Motor neuron (in vitro differentiated cells): ENCODE measurements at regions of chr1 and their contacts with region 1.

Region 1: GRCh38 chr1:78132174-78132947 is 86.6 kb downstream of the GIPC2 start:
- ATAC-seq: peak in 2 of 8 experiments; percentile 27 to 35
- H3K4me3 ChIP-seq: no peak overlapping the region
- H3K27ac ChIP-seq: no peak overlapping the region
- H3K4me1 ChIP-seq: no peaks in the 10 kb centered on the region

Region 2: GRCh38 chr1:77430966-77431690 is 701.2 kb before region 1 on chr1:
- in situ Hi-C with region 1: no loop called
- ATAC-seq: no peak
- H3K4me3 ChIP-seq: no peak overlapping the region
- H3K27ac ChIP-seq: no peak overlapping the region
- H3K4me1 ChIP-seq: no peaks in the 10 kb centered on the region

Region 3: GRCh38 chr1:78607334-78607927 is 475.1 kb after region 1 on chr1:
- in situ Hi-C with region 1: loop called in 4 of 9 experiments (anchors 10 to 25 kb)
- ATAC-seq: no peak
- H3K4me3 ChIP-seq: no peak overlapping the region
- H3K27ac ChIP-seq: no peak overlapping the region
- H3K4me1 ChIP-seq: no peaks in the 10 kb centered on the region